Activated CD8-positive, alpha-beta memory T cell treated with anti-CD3 and anti-CD28 coated beads, Interleukin-2, amount 10 ng/mL, durations not matched to agents 7 days and 5 days (primary cell): ENCODE measurements at regions of chr3 and their contacts with region 1.

Region 1: GRCh38 chr3:112293368-112294321 is at the start of gene SLC9C1:
- DNase-seq: peak; percentile 62
- ATAC-seq: peak; percentile 79
- H3K4me3 Mint-ChIP-seq: peak within 1 kb of the TSS; percentile 45
- H3K27ac Mint-ChIP-seq: peak within 1 kb of the TSS; percentile 76
- H3K4me1 Mint-ChIP-seq: peaks cover 37% of the 10 kb centered on the region
- H3K27me3 Mint-ChIP-seq: no peaks in the 10 kb centered on the region
- total RNA-seq, gene SLC9C1: 0.28 TPM in 1 of 2 experiments, not detected in the other

Region 2: GRCh38 chr3:112111785-112112402 is 181.8 kb before region 1 on chr3:
- CTCF ChIA-PET with region 1: interaction called, 14 read pairs
- DNase-seq: peak; percentile 76
- ATAC-seq: peak; percentile 91
- H3K4me3 Mint-ChIP-seq: no peak overlapping the region
- H3K27ac Mint-ChIP-seq: no peak overlapping the region
- H3K4me1 Mint-ChIP-seq: peaks cover 22% of the 10 kb centered on the region
- H3K27me3 Mint-ChIP-seq: no peaks in the 10 kb centered on the region

Region 3: DNA sequence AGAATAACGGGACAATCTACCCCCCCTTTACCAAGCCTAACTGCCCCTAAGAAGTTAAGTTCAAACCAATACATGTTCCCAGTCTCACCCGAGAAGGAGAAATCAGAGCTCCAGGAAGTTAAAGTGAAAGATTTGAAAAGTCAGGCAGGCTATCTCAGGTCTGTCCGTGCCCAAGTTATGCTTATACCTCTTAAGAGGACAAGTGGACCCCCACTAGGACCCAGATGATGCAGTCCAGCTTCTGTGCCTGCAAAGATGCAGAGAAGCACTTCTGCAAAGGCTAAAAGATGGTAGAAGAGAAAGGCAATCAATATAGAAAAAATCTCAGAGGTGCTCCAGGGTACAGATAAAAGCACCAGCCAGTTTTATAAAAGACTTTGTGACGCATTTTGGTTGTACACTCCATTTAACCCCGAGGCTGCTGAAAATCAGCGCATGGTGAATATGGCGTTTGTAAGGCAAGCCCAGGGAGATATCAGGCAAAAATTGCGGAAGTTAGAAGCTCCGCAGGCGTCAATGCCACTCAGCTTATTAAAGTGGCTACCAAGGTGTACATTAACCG is 10.2 kb after region 1 on chr3:
- CTCF ChIA-PET with region 1: interaction called, 30 read pairs
- DNase-seq: no peak
- ATAC-seq: peak; percentile 50
- H3K4me3 Mint-ChIP-seq: no peak overlapping the region
- H3K27ac Mint-ChIP-seq: no peak overlapping the region
- H3K4me1 Mint-ChIP-seq: peaks cover 2% of the 10 kb centered on the region
- H3K27me3 Mint-ChIP-seq: no peaks in the 10 kb centered on the region

Region 4: GRCh38 chr3:112333002-112333380 is 39.3 kb after region 1 on chr3 and contains the start of gene CD200:
- CTCF ChIA-PET with region 1: interaction called, 13 read pairs
- DNase-seq: peak; percentile 50
- ATAC-seq: peak; percentile 89
- H3K4me3 Mint-ChIP-seq: peak within 1 kb of the TSS; percentile 75
- H3K27ac Mint-ChIP-seq: no peak within 1 kb of the TSS
- H3K4me1 Mint-ChIP-seq: peaks cover 17% of the 10 kb centered on the region
- H3K27me3 Mint-ChIP-seq: peaks cover 13% of the 10 kb centered on the region
- total RNA-seq, gene CD200: 0.67 to 3.6 TPM

Region 5: DNA sequence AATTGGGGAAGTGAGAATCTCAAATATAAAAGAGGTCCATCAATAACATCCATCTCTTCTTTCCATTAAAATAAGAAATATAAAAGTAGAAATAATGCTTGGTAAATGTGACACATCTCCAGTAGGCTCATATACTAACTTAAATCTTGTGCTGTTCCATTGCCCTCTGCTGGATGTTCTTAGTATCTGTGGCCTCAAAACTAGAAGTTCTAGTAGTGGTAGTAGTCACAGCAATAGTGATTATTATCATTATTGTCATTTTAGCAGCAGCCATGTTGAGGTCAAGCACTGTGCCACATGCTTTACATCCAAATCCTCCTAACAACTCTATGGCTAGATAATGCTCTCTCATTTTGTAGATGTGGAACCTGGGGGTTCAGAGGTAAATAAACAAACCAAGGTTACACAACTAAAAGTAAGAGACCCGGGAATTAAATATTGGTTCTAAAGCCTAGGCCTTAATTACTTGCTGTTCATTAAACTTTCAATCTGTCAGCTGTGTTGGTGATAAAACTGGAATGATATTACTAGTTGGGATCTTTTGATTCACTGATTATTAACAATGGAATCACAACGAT is 225.9 kb after region 1 on chr3:
- CTCF ChIA-PET with region 1: interaction called, 24 read pairs
- DNase-seq: no peak
- ATAC-seq: peak; percentile 75
- H3K4me3 Mint-ChIP-seq: no peak overlapping the region
- H3K27ac Mint-ChIP-seq: no peak overlapping the region
- H3K4me1 Mint-ChIP-seq: peaks cover 19% of the 10 kb centered on the region
- H3K27me3 Mint-ChIP-seq: no peaks in the 10 kb centered on the region